Adrenal gland (tissue), 19 donors: ENCODE measurements at regions of chr10 and their contacts with region 1.

Region 1: GRCh38 chr10:114876602-114877300 is 55.2 kb downstream of the FHIP2A start:
- DNase-seq: peak; percentile 74 to 90 (median 80)
- H3K4me3 ChIP-seq: no peak overlapping the region
- H3K27ac ChIP-seq: no peak overlapping the region
- H3K4me1 ChIP-seq: peaks cover 0 to 19% of the 10 kb centered on the region in 2 donors
- H3K27me3 ChIP-seq: no peaks in the 10 kb centered on the region
- CTCF ChIP-seq: peak; percentile 64 to 87 (median 82)
- POLR2A ChIP-seq: no peak

Region 2: GRCh38 chr10:115129752-115130151 is 253.0 kb after region 1 on chr10:
- intact Hi-C with region 1: loop called (anchors 5 kb)
- DNase-seq: no peak
- H3K4me3 ChIP-seq: no peak overlapping the region
- H3K27ac ChIP-seq: no peak overlapping the region
- H3K4me1 ChIP-seq: no peaks in the 10 kb centered on the region
- H3K27me3 ChIP-seq: no peaks in the 10 kb centered on the region
- CTCF ChIP-seq: peak in 5 of 6 experiments; percentile 16 to 72 (median 53)
- POLR2A ChIP-seq: no peak